WTC11 (cell line): ENCODE measurements at regions of chr17 and their contacts with region 1.

Region 1: GRCh38 chr17:41786227-41787020 is at the start of gene JUP:
- DNase-seq: peak; percentile 100
- ATAC-seq: peak; percentile 93
- H3K4me3 Mint-ChIP-seq: peak within 1 kb of the TSS; percentile 88
- H3K27ac Mint-ChIP-seq: peak within 1 kb of the TSS; percentile 92
- H3K4me1 Mint-ChIP-seq: peaks cover 42% of the 10 kb centered on the region
- H3K27me3 Mint-ChIP-seq: no peaks in the 10 kb centered on the region; the same call in 1 of the 2 replicates
- CTCF ChIP-seq: peak; percentile 86
- total RNA-seq, gene JUP: 93.5 to 103 TPM (median 100 TPM) in 3 replicates

Region 2: DNA sequence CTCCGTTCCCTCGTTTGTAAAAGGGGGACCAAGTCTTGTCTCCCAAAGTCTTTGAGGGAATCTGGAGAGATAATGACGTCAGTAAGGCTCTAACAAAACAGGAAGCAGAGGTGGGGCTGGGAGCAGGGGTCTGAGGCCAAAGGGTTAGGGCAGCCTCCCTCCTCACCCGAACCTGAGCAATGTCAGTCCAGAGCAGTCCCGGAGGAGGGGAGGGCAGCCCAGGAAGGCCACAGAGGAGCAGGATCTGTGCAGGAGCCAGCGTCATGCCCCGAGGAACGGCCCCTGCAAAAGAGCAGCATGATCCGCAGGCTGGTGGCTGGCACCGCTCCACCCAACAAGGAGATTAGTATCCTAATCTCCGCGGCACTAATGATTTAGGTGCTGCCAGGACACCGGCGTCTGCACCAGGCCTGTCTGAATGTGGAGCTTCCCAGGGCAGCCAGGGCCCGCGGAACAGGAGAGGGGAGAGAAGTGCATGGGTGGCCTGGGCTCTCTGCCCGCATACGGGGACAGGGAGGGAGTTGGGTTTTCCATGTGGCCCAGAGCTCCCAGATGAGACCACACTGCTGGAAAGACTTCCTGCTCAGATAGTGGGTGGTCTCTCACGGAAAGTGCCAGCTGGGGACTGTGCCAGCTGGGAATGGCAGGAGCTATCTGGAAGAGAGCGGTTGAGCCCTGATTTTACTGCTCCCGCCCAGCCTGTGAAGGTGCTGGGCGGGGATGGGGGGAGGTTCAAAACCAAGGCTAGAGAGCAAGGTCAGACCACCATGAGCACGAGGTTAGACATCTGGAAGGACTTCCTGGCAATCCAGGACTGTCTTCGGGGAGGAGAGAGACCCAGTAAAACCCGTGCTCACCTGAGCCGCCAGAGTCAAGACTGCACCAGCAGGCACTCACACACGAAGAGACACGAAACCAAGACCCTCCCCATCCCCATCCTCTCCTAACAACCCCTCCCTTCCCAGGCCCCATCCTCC is 151.0 kb before region 1 on chr17:
- CTCF ChIA-PET with region 1: no interaction called
- POLR2A ChIA-PET with region 1: no interaction called
- DNase-seq: no peak
- ATAC-seq: peak; percentile 62
- H3K4me3 Mint-ChIP-seq: no peak overlapping the region
- H3K27ac Mint-ChIP-seq: peak overlapping the region; percentile 84
- H3K4me1 Mint-ChIP-seq: peaks cover 10% of the 10 kb centered on the region
- H3K27me3 Mint-ChIP-seq: no peaks in the 10 kb centered on the region
- CTCF ChIP-seq: no peak

Region 3: DNA sequence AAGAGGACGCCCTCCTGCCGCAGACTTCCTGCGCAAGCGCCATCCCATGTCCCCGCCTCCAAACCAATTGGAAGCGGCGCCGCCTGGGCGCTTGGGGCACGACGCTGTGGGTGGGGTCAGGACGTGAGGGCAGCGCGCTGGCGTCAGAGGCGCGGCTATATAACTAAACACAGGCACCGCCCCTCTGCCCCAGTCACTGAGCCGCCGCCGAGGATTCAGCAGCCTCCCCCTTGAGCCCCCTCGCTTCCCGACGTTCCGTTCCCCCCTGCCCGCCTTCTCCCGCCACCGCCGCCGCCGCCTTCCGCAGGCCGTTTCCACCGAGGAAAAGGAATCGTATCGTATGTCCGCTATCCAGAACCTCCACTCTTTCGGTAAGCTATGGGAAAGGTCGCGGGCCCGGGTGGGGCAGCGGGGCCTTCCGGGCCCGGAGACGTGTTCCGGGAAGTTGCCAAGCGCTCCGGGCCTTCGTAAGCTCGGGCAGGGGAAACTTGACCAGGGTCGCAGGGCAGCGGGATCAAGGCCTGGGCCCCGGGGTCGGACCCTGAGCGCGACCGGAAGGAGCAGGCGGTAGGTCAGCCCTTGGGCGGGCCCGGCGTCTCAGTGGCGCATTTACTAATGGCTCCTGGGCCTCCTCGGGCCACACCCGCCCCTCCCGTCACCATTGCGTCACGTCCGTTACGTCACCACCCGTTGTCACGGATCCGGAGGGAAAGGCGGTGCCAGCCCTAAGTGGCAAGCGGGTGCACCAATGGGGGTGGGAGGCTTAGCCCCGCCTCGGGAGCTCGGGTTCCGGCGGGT is 97.5 kb before region 1 on chr17 and contains the start of gene EIF1:
- CTCF ChIA-PET with region 1: interaction called, 25 read pairs
- POLR2A ChIA-PET with region 1: interaction called, 30 read pairs
- DNase-seq: peak; percentile 100
- ATAC-seq: peak; percentile 86
- H3K4me3 Mint-ChIP-seq: peak within 1 kb of the TSS; percentile 92
- H3K27ac Mint-ChIP-seq: peak within 1 kb of the TSS; percentile 99
- H3K4me1 Mint-ChIP-seq: peaks cover 15% of the 10 kb centered on the region
- H3K27me3 Mint-ChIP-seq: peaks cover 9% of the 10 kb centered on the region
- CTCF ChIP-seq: no peak
- total RNA-seq, gene EIF1: 466 to 481 TPM (median 475 TPM) in 3 replicates

Region 4: DNA sequence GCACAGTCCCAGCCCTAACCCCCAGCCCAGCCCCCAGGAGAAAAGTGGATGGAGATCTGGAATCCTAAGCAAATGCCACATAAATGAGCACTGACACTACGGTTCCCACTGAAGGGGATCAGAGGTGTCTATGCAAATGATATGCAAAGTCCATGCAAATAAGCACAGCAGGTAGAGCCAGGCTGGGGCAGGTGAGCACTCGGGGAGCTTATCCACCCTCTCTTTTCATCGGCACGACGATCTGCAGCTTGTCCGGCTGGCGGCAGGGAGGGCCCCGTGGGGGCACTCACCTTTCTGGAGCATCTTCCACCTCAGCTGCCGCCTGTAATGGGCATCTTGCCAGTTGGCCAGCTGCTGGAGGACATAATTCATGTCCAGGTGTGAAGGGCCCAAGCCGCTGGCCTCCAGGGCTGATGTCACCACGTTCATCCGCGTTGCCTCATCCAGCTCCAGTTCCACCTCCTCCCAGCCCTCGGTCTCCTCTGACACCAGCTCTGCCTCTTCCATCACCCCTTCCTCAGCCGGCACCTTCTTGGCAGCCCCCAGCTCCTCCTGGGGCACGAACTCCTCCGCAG is 61.9 kb before region 1 on chr17:
- CTCF ChIA-PET with region 1: interaction called, 10 read pairs
- POLR2A ChIA-PET with region 1: interaction called, 3 read pairs
- DNase-seq: no peak
- ATAC-seq: no peak
- H3K4me3 Mint-ChIP-seq: no peak overlapping the region
- H3K27ac Mint-ChIP-seq: no peak overlapping the region
- H3K4me1 Mint-ChIP-seq: 0 out of 2 replicates have a peak, but pooled peaks cover 6% of the 10 kb centered on the region
- H3K27me3 Mint-ChIP-seq: peaks cover 5% of the 10 kb centered on the region; the same call in 1 of the 2 replicates
- CTCF ChIP-seq: no peak

Region 5: DNA sequence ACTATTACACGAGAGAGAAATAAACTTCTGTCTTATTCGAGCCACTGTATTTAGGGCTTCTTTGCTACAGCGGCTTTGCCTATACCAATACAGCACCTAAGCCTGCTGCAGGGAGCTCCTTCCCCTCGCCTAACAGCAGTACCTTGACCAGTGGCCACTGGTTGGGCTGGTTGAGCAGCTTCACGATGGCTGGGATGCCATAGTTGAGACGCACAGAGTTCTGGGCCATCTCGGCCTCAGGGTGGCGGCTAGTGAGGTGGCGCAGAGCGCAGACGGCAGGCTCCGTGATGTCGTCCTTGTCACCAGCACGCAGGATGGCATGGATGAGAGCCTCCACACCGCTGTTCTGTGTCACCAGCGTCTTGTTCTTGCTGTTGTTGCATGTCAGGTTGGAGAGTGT is 23.6 kb before region 1 on chr17:
- CTCF ChIA-PET with region 1: interaction called, 14 read pairs
- POLR2A ChIA-PET with region 1: interaction called, 3 read pairs
- DNase-seq: no peak
- ATAC-seq: no peak
- H3K4me3 Mint-ChIP-seq: no peak overlapping the region
- H3K27ac Mint-ChIP-seq: no peak overlapping the region
- H3K4me1 Mint-ChIP-seq: no peaks in the 10 kb centered on the region
- H3K27me3 Mint-ChIP-seq: no peaks in the 10 kb centered on the region
- CTCF ChIP-seq: no peak

Region 6: GRCh38 chr17:41811549-41812380 is 25.3 kb after region 1 on chr17 and contains the start of gene P3H4:
- CTCF ChIA-PET with region 1: interaction called, 91 read pairs
- POLR2A ChIA-PET with region 1: interaction called, 62 read pairs
- DNase-seq: peak; percentile 78
- ATAC-seq: peak; percentile 44
- H3K4me3 Mint-ChIP-seq: peak within 1 kb of the TSS; percentile 98
- H3K27ac Mint-ChIP-seq: peak within 1 kb of the TSS; percentile 95
- H3K4me1 Mint-ChIP-seq: peaks cover 24% of the 10 kb centered on the region
- H3K27me3 Mint-ChIP-seq: peaks cover 7% of the 10 kb centered on the region
- CTCF ChIP-seq: peak; percentile 40; the same call in 1 of the 2 replicates
- total RNA-seq, gene P3H4: 32.1 to 34.6 TPM (median 33.5 TPM) in 3 replicates

Region 7: DNA sequence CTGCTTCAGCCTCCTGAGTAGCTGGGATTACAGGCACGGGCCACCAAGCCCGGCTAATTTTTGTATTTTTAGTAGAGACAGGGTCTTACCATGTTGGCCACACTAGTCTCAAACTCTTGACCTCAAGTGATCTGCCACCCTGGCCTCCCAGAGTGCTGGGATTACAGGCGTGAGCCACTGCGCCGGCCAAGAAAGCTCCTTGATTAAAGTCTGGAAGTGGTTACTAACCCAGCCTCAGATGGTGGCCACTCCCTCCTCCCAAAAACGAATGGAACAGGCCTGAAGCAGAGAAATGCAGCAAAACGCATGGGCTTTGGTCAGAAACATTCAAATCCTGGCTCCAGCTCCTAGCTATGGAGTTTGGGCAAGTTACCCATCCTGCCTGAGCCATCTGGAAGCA is 37.7 kb after region 1 on chr17:
- CTCF ChIA-PET with region 1: interaction called, 11 read pairs
- POLR2A ChIA-PET with region 1: interaction called, 13 read pairs
- DNase-seq: no peak
- ATAC-seq: no peak
- H3K4me3 Mint-ChIP-seq: no peak overlapping the region
- H3K27ac Mint-ChIP-seq: no peak overlapping the region; the same call in 1 of the 2 replicates
- H3K4me1 Mint-ChIP-seq: peaks cover 7% of the 10 kb centered on the region; the same call in 1 of the 2 replicates
- H3K27me3 Mint-ChIP-seq: no peaks in the 10 kb centered on the region; the same call in 1 of the 2 replicates
- CTCF ChIP-seq: no peak

Region 8: GRCh38 chr17:41918314-41919164 is 132.1 kb after region 1 on chr17 and contains the start of gene ACLY:
- CTCF ChIA-PET with region 1: interaction called, 20 read pairs
- POLR2A ChIA-PET with region 1: no interaction called
- DNase-seq: peak; percentile 99
- ATAC-seq: peak; percentile 89
- H3K4me3 Mint-ChIP-seq: peak within 1 kb of the TSS; percentile 84
- H3K27ac Mint-ChIP-seq: peak within 1 kb of the TSS; percentile 96
- H3K4me1 Mint-ChIP-seq: peaks cover 51% of the 10 kb centered on the region
- H3K27me3 Mint-ChIP-seq: no peaks in the 10 kb centered on the region
- CTCF ChIP-seq: no peak
- total RNA-seq, gene ACLY: 312 to 350 TPM (median 316 TPM) in 3 replicates